Dorsolateral prefrontal cortex (tissue), 120 donors: ENCODE measurements at regions of chr18 and their contacts with region 1.

Region 1: GRCh38 chr18:63144748-63145147 is 174.8 kb downstream of the BCL2 start:
- DNase-seq: no peak
- H3K4me3 ChIP-seq: no peak overlapping the region
- H3K27ac ChIP-seq: no peak overlapping the region
- H3K27me3 ChIP-seq: no peaks in the 10 kb centered on the region
- CTCF ChIP-seq: no peak

Region 2: DNA sequence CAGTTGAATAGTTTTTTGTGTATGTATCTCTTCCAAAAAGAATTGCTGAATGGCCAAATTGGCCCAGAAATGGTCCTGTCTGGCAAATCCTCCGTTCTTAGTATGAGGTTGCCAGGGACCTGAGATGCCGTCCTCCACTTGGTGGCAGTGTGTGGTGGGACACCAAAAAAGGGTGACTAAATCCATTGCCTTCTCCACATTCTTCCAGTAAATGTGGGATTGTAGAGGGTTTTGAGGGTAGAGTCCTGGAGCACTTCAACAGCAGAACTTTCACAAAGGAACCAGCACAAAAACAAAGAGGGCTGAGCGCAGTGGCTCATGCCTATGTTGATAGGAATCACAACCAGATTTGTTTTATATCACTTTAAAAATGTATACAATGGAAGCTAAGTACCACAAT is 25.1 kb before region 1 on chr18:
- intact Hi-C with region 1: loop called in 1 of 2 experiments (anchors 1 kb)
- DNase-seq: peak in 8 of 10 donors; percentile 24 to 75 (median 64)
- H3K4me3 ChIP-seq: no peak overlapping the region
- H3K27ac ChIP-seq: no peak overlapping the region
- H3K27me3 ChIP-seq: peaks cover 0 to 5% (median 0%) of the 10 kb centered on the region in 45 donors
- CTCF ChIP-seq: peak; percentile 18 to 81 (median 64)